Activated naive CD4-positive, alpha-beta T cell treated with anti-CD3 and anti-CD28 coated beads for 36 hours (primary cell): ENCODE measurements at regions of chr3 and their contacts with region 1.

Region 1: DNA sequence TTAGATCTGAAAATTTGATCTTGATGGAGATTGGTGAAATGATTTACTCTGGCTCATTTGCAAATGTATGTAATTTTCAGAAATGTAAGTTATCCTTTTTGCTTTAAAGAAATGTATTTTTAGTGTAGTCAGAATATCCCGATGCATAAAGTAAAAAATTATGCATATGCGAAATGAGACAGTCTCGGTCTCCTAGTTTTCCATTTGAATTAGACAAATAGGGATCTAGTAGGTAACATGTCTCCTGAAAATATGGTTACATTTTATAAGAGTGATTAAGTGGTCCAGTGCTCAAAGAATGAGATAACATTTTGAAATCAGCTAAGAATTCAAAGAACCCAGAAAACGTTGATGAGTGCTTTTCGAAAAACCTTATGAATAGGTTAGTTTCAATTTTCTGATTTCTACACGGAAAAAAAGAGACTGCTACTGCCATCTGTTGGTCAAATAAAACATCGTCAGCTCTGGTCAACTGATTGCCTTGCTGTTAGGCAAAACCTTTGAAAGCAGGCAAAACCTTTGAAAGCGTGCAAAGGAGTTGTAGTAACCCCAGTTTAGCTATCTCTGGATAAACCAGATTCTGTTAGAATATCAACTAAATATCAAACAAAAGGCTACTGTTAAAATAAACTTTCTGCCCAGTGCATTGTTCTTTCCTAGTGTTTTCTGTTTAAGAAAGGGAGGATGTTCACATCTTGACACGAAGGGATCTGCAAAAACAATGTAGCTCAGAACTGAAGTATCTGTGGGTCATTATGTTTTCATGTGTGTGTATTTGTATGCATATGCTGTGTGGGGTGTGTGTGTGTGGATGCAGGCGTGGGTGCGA is 59.3 kb upstream of the CHMP2B start:
- DNase-seq: peak; percentile 55
- H3K4me3 Mint-ChIP-seq: no peak overlapping the region
- H3K27ac Mint-ChIP-seq: no peak overlapping the region
- H3K4me1 Mint-ChIP-seq: peaks cover 4% of the 10 kb centered on the region
- H3K27me3 Mint-ChIP-seq: peaks cover 20% of the 10 kb centered on the region

Region 2: GRCh38 chr3:86702381-86702958 is 465.4 kb before region 1 on chr3:
- CTCF ChIA-PET with region 1: interaction called, 3 read pairs
- intact Hi-C with region 1: loop called (anchors 1 kb)
- DNase-seq: no peak
- H3K4me3 Mint-ChIP-seq: no peak overlapping the region
- H3K27ac Mint-ChIP-seq: no peak overlapping the region
- H3K4me1 Mint-ChIP-seq: no peaks in the 10 kb centered on the region
- H3K27me3 Mint-ChIP-seq: no peaks in the 10 kb centered on the region

Region 3: DNA sequence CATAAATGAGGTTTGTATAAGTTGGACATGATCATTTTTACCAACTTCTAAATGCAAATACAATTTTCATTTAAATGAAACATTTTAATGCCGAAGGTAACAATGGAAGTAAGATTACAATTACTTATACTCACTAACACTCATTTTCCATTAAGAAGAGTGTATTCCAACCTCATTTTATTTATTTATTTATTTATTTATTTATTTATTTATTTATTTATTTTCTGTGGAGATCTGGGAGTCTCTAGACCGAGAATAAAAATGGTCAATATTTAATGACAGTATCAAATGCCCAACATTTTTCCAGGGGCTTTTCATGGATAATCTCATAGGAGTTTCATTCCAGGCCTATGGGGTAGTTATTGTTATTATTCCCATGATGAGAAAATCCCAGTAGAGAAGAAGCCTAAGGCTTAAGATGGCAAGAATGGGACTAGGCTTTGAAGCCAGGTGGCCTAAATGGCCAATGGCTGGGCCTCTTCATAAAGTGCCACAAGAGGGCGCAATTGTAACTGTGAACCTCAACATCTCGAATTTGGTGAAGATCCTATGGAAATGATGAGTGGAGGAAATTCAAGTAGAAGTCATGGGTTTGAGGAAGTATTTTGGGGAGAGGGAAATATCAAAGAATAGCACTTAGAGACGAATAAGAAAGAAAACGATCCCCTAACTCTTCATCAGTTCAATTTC is 198.2 kb before region 1 on chr3:
- CTCF ChIA-PET with region 1: no interaction called
- intact Hi-C with region 1: loop called (anchors 1 kb)
- DNase-seq: peak; percentile 52
- H3K4me3 Mint-ChIP-seq: no peak overlapping the region
- H3K27ac Mint-ChIP-seq: no peak overlapping the region
- H3K4me1 Mint-ChIP-seq: no peaks in the 10 kb centered on the region
- H3K27me3 Mint-ChIP-seq: peaks cover 2% of the 10 kb centered on the region

Region 4: GRCh38 chr3:87132801-87133200 is 35.0 kb before region 1 on chr3:
- CTCF ChIA-PET with region 1: no interaction called
- intact Hi-C with region 1: no loop called
- DNase-seq: no peak
- H3K4me3 Mint-ChIP-seq: no peak overlapping the region
- H3K27ac Mint-ChIP-seq: no peak overlapping the region
- H3K4me1 Mint-ChIP-seq: no peaks in the 10 kb centered on the region
- H3K27me3 Mint-ChIP-seq: peaks cover 2% of the 10 kb centered on the region

Region 5: GRCh38 chr3:87350364-87351199 is 182.7 kb after region 1 on chr3:
- CTCF ChIA-PET with region 1: no interaction called
- intact Hi-C with region 1: no loop called
- DNase-seq: peak; percentile 22
- H3K4me3 Mint-ChIP-seq: no peak overlapping the region
- H3K27ac Mint-ChIP-seq: no peak overlapping the region
- H3K4me1 Mint-ChIP-seq: peaks cover 2% of the 10 kb centered on the region
- H3K27me3 Mint-ChIP-seq: peaks cover 3% of the 10 kb centered on the region